ENCODE measurements at regions of chr3 and their contacts with region 1.

Region 1: GRCh38 chr3:59450946-59451763 is 401.3 kb upstream of the CFAP20DC start:
- DNase-seq: peak; percentile 93
- H3K4me3 Mint-ChIP-seq: peak overlapping the region; percentile 65
- H3K27ac Mint-ChIP-seq: peak overlapping the region; percentile 94
- H3K4me1 Mint-ChIP-seq: peaks cover 65% of the 10 kb centered on the region
- H3K27me3 Mint-ChIP-seq: no peaks in the 10 kb centered on the region

Region 2: DNA sequence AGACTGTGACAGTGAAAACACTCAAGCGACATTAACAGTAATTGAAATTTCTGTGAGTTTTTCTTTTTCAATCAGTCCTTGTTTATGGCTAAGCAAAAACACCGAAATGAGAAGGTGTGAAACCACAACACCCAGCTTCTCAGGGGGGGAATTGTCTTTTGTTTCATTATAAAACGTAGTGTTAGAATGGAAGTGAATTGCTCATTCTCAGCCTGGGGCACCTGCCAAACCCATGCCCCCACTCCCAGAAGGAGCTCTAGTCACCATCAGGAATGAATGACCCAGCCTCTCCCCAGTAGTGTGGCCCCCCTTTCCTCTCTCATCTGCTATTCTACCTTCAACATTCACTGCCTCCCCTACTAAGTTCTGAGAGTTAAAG is 215.5 kb before region 1 on chr3:
- intact Hi-C with region 1: loop called (anchors 5 kb)
- DNase-seq: peak; percentile 76
- H3K4me3 Mint-ChIP-seq: peak overlapping the region; percentile 4
- H3K27ac Mint-ChIP-seq: peak overlapping the region; percentile 66
- H3K4me1 Mint-ChIP-seq: peaks cover 17% of the 10 kb centered on the region
- H3K27me3 Mint-ChIP-seq: no peaks in the 10 kb centered on the region

Region 3: GRCh38 chr3:59469948-59470723 is 19.0 kb after region 1 on chr3:
- intact Hi-C with region 1: loop called (anchors 1 kb)
- DNase-seq: peak; percentile 61
- H3K4me3 Mint-ChIP-seq: no peak overlapping the region
- H3K27ac Mint-ChIP-seq: peak overlapping the region; percentile 56
- H3K4me1 Mint-ChIP-seq: peaks cover 40% of the 10 kb centered on the region
- H3K27me3 Mint-ChIP-seq: no peaks in the 10 kb centered on the region

Region 4: DNA sequence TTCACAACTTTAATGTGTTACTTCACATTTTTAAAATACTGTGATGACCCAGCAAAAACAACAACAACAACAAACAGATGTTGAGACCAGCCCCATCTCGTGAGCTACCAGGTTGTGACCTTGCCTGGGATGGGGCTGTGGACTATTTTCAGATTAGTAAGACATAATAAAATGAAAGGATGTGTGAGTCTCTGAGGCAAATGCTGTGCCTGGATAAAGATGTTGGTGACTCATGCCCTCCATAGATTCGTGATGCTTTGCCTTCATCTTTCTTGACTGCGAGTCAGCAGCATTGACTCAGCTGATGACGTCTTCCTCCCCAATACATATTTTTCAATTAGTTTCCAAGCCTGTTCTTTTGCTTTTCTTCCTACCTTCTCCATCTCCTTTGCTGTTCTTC is 51.7 kb after region 1 on chr3:
- intact Hi-C with region 1: loop called (anchors 2 kb)
- DNase-seq: peak; percentile 70
- H3K4me3 Mint-ChIP-seq: peak overlapping the region; percentile 4
- H3K27ac Mint-ChIP-seq: peak overlapping the region; percentile 46
- H3K4me1 Mint-ChIP-seq: peaks cover 12% of the 10 kb centered on the region
- H3K27me3 Mint-ChIP-seq: no peaks in the 10 kb centered on the region

Region 5: DNA sequence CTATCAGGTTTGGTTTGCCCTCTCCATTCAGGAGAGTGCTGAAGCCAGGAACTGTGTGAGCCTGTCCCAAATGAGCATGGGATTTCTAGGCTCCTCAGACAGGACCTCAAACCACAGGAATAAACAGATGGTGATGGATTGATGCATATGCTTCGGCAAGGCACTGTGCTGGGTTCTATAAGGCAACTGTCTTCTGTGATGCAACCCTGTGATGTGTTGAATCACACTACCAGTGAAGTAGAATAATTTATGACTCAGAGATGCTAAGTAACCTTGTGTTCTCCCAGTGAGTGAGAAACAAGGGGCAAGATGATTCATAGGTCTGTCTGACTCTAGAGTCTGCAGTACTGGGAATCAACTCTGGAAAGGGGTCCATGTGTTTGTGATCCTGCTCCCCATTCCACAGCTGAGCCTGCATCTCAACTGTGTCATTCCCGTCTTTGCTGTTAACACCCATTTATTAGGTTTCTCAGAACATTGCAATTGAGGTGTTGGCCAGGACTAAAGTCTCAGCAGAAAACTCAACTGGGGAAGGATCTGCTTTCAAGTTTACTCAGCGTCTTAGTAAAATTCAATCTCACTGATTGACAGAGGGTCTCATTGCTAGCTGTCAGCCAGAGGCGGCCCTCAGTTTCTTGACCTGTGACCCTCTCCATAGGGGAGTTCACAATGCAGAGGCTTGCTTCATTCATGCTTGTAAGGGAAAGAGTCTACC is 108.7 kb after region 1 on chr3:
- intact Hi-C with region 1: loop called (anchors 1 kb)
- DNase-seq: no peak
- H3K4me3 Mint-ChIP-seq: peak overlapping the region; percentile 1
- H3K27ac Mint-ChIP-seq: peak overlapping the region; percentile 89
- H3K4me1 Mint-ChIP-seq: peaks cover 25% of the 10 kb centered on the region
- H3K27me3 Mint-ChIP-seq: no peaks in the 10 kb centered on the region

Region 6: GRCh38 chr3:59809710-59810444 is 358.7 kb after region 1 on chr3:
- intact Hi-C with region 1: no loop called
- DNase-seq: no peak
- H3K4me3 Mint-ChIP-seq: no peak overlapping the region
- H3K27ac Mint-ChIP-seq: peak overlapping the region; percentile 29
- H3K4me1 Mint-ChIP-seq: peaks cover 7% of the 10 kb centered on the region
- H3K27me3 Mint-ChIP-seq: no peaks in the 10 kb centered on the region

Region 7: DNA sequence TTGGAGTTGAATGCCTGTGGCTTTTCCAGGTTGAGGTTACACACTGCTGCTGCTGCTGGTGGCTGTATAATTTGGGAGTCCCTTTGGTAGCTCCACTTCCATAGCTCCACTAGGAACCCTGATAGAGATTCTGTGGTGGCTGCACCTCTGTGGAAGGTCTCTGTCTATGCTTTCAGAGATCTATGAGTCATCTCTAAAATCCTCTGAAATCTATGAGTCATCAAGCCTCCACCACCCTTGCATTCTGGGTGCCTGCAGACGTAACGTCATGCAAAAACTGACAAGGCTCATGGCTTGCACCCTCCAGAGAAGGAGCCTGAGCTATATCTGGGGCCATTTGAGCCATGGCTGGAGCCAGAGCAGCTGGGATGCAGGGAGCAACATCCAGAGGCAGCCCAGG is 635.7 kb after region 1 on chr3:
- intact Hi-C with region 1: loop called (anchors 10 kb)
- DNase-seq: peak; percentile 82
- H3K4me3 Mint-ChIP-seq: peak overlapping the region; percentile 53
- H3K27ac Mint-ChIP-seq: peak overlapping the region; percentile 87
- H3K4me1 Mint-ChIP-seq: peaks cover 52% of the 10 kb centered on the region
- H3K27me3 Mint-ChIP-seq: no peaks in the 10 kb centered on the region